Activated CD4-positive, alpha-beta T cell treated with anti-CD3 and anti-CD28 coated beads for 36 hours (primary cell): ENCODE measurements at regions of chr22 and their contacts with region 1.

Region 1: GRCh38 chr22:29932136-29932535 is 49.2 kb downstream of the MTMR3 start:
- DNase-seq: no peak
- ATAC-seq: peak; percentile 51
- H3K4me3 Mint-ChIP-seq: no peak overlapping the region
- H3K27ac Mint-ChIP-seq: no peak overlapping the region
- H3K4me1 Mint-ChIP-seq: peaks cover 27% of the 10 kb centered on the region
- H3K27me3 Mint-ChIP-seq: no peaks in the 10 kb centered on the region

Region 2: DNA sequence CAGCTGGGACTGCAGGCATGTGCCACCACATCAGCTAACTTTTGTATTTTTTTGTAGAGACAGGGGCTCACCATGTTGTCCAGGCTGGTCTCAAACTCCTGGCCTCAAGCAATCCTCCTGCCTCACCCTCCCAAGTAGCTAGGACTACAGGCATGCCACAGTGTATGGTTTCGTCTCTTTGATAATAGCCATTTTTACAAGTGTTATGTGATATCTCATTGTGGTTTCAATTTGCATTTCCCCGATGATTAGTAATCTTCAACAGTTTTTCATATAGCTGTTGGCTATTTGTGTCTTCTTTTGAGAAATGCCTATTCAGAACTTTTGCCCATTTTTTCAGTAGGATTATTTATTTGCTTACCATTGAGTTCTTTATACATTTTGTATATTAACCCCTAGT is 58.2 kb before region 1 on chr22:
- CTCF ChIA-PET with region 1: no interaction called
- POLR2A ChIA-PET with region 1: interaction called, 10 read pairs
- intact Hi-C with region 1: no loop called
- DNase-seq: no peak
- ATAC-seq: no peak
- H3K4me3 Mint-ChIP-seq: no peak overlapping the region
- H3K27ac Mint-ChIP-seq: no peak overlapping the region
- H3K4me1 Mint-ChIP-seq: peaks cover 5% of the 10 kb centered on the region
- H3K27me3 Mint-ChIP-seq: peaks cover 4% of the 10 kb centered on the region